Mammary epithelial cell (primary cell): ENCODE measurements at regions of chr17 and their contacts with region 1.

Region 1: GRCh38 chr17:29931231-29931932 is 1.4 kb upstream of the SSH2 start:
- DNase-seq: peak; percentile 62
- H3K4me3 ChIP-seq: peak overlapping the region in 2 of 3 experiments; percentile 62 to 82
- H3K27ac ChIP-seq: peak overlapping the region; percentile 64
- H3K4me1 ChIP-seq: peaks cover 17% of the 10 kb centered on the region
- H3K27me3 ChIP-seq: no peaks in the 10 kb centered on the region
- CTCF ChIP-seq: peak; percentile 89 to 92

Region 2: GRCh38 chr17:29195465-29196081 is 735.8 kb before region 1 on chr17:
- CTCF ChIA-PET with region 1: no interaction called
- dilution Hi-C with region 1: no loop called
- in situ Hi-C with region 1: no loop called
- intact Hi-C with region 1: no loop called
- DNase-seq: peak; percentile 24
- H3K4me3 ChIP-seq: no peak overlapping the region
- H3K27ac ChIP-seq: no peak overlapping the region
- H3K4me1 ChIP-seq: peaks cover 9% of the 10 kb centered on the region
- H3K27me3 ChIP-seq: no peaks in the 10 kb centered on the region
- CTCF ChIP-seq: no peak

Region 3: GRCh38 chr17:29561554-29562517 is 369.5 kb before region 1 on chr17:
- CTCF ChIA-PET with region 1: no interaction called
- dilution Hi-C with region 1: loop called (anchors 5 kb)
- in situ Hi-C with region 1: no loop called
- intact Hi-C with region 1: no loop called
- DNase-seq: no peak
- H3K4me3 ChIP-seq: no peak overlapping the region
- H3K27ac ChIP-seq: no peak overlapping the region
- H3K4me1 ChIP-seq: peaks cover 6% of the 10 kb centered on the region
- H3K27me3 ChIP-seq: no peaks in the 10 kb centered on the region
- CTCF ChIP-seq: no peak

Region 4: GRCh38 chr17:29617125-29617480 is 314.3 kb before region 1 on chr17:
- CTCF ChIA-PET with region 1: no interaction called
- dilution Hi-C with region 1: no loop called
- in situ Hi-C with region 1: no loop called
- intact Hi-C with region 1: loop called (anchors 1 kb)
- DNase-seq: no peak
- H3K4me3 ChIP-seq: no peak overlapping the region
- H3K27ac ChIP-seq: no peak overlapping the region
- H3K4me1 ChIP-seq: peaks cover 51% of the 10 kb centered on the region
- H3K27me3 ChIP-seq: no peaks in the 10 kb centered on the region
- CTCF ChIP-seq: peak; percentile 31 to 45

Region 5: GRCh38 chr17:29645515-29646051 is 285.8 kb before region 1 on chr17:
- CTCF ChIA-PET with region 1: no interaction called
- dilution Hi-C with region 1: no loop called
- in situ Hi-C with region 1: loop called in 1 of 2 experiments (anchors 25 kb)
- intact Hi-C with region 1: no loop called
- DNase-seq: peak; percentile 75
- H3K4me3 ChIP-seq: no peak overlapping the region
- H3K27ac ChIP-seq: no peak overlapping the region
- H3K4me1 ChIP-seq: peaks cover 9% of the 10 kb centered on the region
- H3K27me3 ChIP-seq: no peaks in the 10 kb centered on the region
- CTCF ChIP-seq: no peak

Region 6: DNA sequence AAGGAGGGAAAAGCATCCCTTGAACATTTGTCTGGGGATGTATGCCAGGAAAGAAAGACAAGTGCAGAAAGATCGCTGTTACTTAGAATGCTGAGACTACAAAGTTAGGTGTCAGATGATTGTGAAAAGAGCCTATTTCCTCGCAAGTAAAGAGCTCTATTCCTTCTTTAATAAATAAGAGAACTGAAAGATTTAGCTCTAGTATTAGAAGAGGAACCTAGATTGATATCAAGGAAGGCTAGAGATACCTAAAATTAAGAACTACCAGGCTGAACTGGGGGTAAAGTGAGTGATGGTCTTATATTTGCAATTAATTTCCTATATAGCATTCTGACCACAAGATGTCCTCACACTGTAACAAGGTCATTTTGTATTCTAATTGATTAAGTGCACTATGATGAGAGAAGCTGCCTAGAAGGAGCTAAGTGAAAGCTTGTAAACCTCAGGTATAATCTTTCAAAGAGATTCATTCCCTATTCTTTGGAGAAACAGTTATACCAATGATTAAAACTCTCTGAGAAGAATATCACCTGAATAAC is 63.7 kb before region 1 on chr17:
- CTCF ChIA-PET with region 1: interaction called, 42 read pairs
- dilution Hi-C with region 1: loop called (anchors 5 kb)
- in situ Hi-C with region 1: no loop called
- intact Hi-C with region 1: loop called (anchors 1 kb)
- DNase-seq: no peak
- H3K4me3 ChIP-seq: no peak overlapping the region
- H3K27ac ChIP-seq: no peak overlapping the region
- H3K4me1 ChIP-seq: peaks cover 8% of the 10 kb centered on the region
- H3K27me3 ChIP-seq: no peaks in the 10 kb centered on the region
- CTCF ChIP-seq: peak; percentile 11 to 33

Region 7: DNA sequence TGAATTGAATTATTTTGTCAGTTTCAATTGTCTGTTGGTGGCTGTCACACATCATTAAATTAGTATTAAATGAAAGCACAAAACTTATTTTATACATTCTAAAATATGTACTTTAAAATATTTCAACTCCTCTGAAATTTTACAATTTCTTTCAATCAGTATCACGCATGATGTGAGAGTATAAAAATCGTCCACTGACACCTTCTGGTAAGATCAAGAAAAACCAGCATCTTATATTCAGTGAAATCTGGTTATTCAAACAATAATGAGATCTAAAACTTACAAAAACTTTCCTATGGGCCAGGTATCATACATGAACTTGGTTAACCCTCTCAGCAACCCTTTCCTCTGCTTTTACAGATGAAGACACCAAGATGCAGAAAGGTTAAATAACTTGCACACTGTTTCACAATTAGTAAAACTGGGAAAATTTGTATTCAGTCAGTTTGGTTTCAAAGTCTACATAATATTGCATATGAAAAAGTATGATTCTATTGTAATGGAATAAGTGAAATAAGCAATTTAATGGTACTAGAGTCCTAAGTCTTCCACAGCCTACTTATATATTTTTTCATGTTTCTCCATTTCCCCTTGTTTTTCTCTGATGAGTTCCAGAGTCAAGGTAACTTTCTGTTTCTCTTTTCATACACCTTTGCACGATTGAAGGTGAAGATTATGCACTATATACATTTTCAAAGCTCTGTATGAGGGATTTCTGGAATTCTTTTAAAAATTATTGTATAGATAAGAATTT is 68.8 kb after region 1 on chr17:
- CTCF ChIA-PET with region 1: no interaction called
- dilution Hi-C with region 1: no loop called
- in situ Hi-C with region 1: no loop called
- intact Hi-C with region 1: loop called (anchors 1 kb)
- DNase-seq: no peak
- H3K4me3 ChIP-seq: no peak overlapping the region
- H3K27ac ChIP-seq: no peak overlapping the region
- H3K4me1 ChIP-seq: peaks cover 12% of the 10 kb centered on the region
- H3K27me3 ChIP-seq: no peaks in the 10 kb centered on the region
- CTCF ChIP-seq: peak in 1 of 2 donors; percentile 15

Region 8: DNA sequence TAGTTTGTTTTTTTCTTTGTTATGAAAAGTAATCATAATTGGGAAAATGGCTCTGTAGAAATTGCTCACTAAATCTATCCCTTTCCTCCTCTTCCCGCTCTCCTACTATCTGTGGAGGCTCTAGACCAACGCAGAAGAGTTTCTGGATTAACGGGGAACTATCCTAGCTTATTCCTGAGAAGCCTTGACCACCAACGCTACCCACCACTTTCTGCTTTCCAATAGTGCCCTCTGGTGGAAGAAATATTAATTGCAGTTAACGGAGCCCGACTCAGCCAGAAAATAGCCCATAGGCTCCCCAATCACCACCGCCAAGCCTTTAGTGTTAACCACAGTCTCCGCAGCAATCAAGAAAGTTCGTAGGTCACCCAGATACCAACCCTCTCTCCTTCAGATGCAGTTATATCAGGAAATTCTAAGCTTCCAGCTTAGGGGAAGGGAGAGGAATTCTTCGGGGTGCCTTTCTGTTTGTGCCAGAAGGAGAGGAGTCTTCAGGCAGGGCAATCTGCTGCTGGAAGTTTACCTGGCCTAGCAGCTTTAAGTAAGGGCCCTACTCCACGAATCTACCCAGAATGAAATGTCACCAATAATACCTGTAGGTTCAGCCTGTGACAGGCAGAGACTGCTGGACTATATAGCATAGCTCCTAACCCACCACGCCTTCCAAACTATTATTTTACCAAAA is 162.2 kb after region 1 on chr17:
- CTCF ChIA-PET with region 1: interaction called, 6 read pairs
- dilution Hi-C with region 1: no loop called
- in situ Hi-C with region 1: no loop called
- intact Hi-C with region 1: loop called (anchors 1 kb)
- DNase-seq: peak; percentile 43
- H3K4me3 ChIP-seq: no peak overlapping the region
- H3K27ac ChIP-seq: no peak overlapping the region
- H3K4me1 ChIP-seq: no peaks in the 10 kb centered on the region
- H3K27me3 ChIP-seq: no peaks in the 10 kb centered on the region
- CTCF ChIP-seq: peak; percentile 62 to 70